ENCODE measurements at regions of chr6 and their contacts with region 1.

Region 1: GRCh38 chr6:2215342-2215741 is 30.1 kb downstream of the GMDS start:
- DNase-seq: no peak
- ATAC-seq: no peak
- H3K4me3 ChIP-seq: no peak overlapping the region
- H3K27ac ChIP-seq: no peak overlapping the region
- H3K4me1 ChIP-seq: no peaks in the 10 kb centered on the region
- H3K27me3 ChIP-seq: peaks cover 0 to 7% of the 10 kb centered on the region in 2 experiments; a peak in 1 of 5 replicates
- CTCF ChIP-seq: no peak
- EP300 ChIP-seq: no peak
- POLR2A ChIP-seq: no peak
- RAD21 ChIP-seq: no peak

Region 2: DNA sequence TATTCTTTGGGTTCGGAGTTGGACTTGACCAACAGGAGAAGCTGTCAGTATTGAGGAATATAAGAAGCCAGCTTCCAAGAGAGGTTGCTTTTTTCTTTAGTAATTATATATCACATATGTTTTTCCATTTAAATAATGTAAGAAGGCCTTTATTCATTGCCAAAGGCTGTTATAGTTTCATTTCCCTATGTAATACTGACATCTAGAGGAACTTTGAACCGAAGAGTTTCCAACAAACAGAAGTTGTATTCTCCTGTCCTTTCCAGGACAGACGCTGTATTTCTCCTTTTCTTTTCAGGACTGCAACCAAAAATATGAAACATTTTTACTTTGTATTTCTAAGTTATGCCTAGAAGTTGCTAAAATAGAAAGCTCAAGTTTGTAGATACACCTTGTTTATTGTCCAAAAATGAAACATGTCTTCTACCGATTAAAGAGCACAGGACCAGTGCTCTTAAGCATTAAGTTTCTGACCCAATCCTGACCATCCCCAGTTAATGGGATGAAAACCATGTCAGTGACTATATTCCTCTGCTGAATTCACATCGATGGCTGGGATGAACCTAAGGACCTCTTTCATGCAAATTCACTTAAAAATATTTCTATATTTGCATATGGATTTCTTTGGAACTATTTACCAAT is 480.2 kb after region 1 on chr6:
- CTCF ChIA-PET with region 1: no interaction called
- POLR2A ChIA-PET with region 1: no interaction called
- in situ Hi-C with region 1: no loop called
- intact Hi-C with region 1: loop called (anchors 10 kb)
- DNase-seq: peak in 1 of 4 experiments; percentile 30
- ATAC-seq: peak; percentile 72; the same call in 2 of the 3 replicates
- H3K4me3 ChIP-seq: no peak overlapping the region
- H3K27ac ChIP-seq: no peak overlapping the region
- H3K4me1 ChIP-seq: no peaks in the 10 kb centered on the region
- H3K27me3 ChIP-seq: peaks cover 51 to 59% of the 10 kb centered on the region in 2 experiments
- CTCF ChIP-seq: peak; percentile 17 to 62 (median 48); a peak in 4 of 6 replicates
- EP300 ChIP-seq: no peak
- POLR2A ChIP-seq: no peak
- RAD21 ChIP-seq: peak; percentile 83 to 84